ENCODE measurements at regions of chr5 and their contacts with region 1.

Region 1: DNA sequence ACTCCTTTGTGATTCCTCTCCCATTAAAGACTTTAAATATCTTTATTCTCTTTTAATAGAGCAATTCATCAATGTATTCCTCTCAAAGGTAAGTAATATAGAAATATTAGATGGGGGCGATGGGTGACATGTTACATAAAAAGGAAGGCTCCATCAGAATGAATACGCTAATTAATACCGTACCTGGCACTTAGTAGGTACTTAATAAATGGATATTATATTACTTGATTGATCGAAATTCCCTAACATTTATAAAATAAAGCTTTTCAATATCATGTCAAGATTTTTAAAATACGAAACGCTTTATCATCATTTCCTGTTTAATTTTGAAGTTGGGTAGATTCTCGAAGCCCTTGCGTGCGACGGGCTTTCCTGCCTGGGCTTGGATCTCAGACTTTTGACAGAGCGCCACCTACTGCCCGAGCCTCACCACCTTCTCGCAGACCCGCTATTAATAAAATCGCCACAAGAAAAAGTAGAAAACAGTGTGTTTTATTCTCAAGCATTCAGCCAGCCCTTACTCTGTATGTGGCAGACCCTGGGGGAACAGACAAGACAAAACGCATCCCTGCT is 99.4 kb downstream of the C5orf15 start:
- DNase-seq: peak; percentile 42 to 70 (median 51)
- H3K4me3 ChIP-seq: no peak overlapping the region
- H3K4me3 Mint-ChIP-seq: no peak overlapping the region
- H3K27ac ChIP-seq: no peak overlapping the region
- H3K27ac Mint-ChIP-seq: no peak overlapping the region
- H3K4me1 ChIP-seq: no peaks in the 10 kb centered on the region
- H3K4me1 Mint-ChIP-seq: peaks cover 0 to 4% (median 0%) of the 10 kb centered on the region in 3 donors
- H3K27me3 ChIP-seq: peaks cover 5% of the 10 kb centered on the region
- H3K27me3 Mint-ChIP-seq: peaks cover 11 to 36% of the 10 kb centered on the region in 2 donors

Region 2: DNA sequence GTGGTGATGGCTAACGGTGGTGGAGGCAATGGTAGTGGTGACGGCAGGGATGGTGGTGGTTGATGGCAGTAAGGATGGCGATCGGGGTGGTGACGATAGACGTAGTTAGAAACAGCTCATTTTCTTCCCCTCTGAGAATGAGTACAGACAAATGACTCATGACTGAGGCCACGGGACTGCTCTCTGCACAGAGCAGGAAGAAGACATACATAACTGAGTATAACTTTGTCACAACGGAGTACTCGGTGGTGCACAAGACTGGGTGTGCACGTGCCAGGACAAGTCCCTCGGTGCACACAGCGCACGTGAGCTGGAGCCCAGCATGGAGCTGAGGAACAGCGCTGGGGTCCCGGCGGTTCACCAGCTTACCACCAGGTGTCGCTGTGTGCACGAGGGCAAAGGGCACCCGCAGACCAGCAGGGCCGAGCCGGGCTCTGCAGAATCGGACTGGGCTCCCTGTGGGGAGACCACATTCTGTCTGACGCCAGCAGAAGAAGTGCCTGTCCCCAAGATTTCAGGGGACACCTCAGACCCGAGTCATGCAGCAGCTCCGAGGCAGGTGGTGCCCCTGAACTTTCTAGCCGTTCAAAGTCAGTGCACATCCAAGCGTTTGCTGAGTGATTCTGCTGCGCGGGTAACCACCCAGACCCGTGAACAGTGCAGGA is 445.3 kb before region 1 on chr5:
- CTCF ChIA-PET with region 1: interaction called, 14 read pairs
- POLR2A ChIA-PET with region 1: no interaction called
- DNase-seq: peak; percentile 42 to 65 (median 58)
- H3K4me3 ChIP-seq: no peak overlapping the region
- H3K4me3 Mint-ChIP-seq: no peak overlapping the region
- H3K27ac ChIP-seq: no peak overlapping the region
- H3K27ac Mint-ChIP-seq: no peak overlapping the region
- H3K4me1 ChIP-seq: no peaks in the 10 kb centered on the region
- H3K4me1 Mint-ChIP-seq: peaks cover 5 to 7% (median 6%) of the 10 kb centered on the region in 3 donors
- H3K27me3 ChIP-seq: no peaks in the 10 kb centered on the region
- H3K27me3 Mint-ChIP-seq: peaks cover 6 to 30% of the 10 kb centered on the region in 2 donors

Region 3: GRCh38 chr5:133881576-133882388 is 12.8 kb after region 1 on chr5:
- CTCF ChIA-PET with region 1: interaction called, 12 read pairs
- POLR2A ChIA-PET with region 1: no interaction called
- DNase-seq: no peak
- H3K4me3 ChIP-seq: no peak overlapping the region
- H3K4me3 Mint-ChIP-seq: no peak overlapping the region
- H3K27ac ChIP-seq: no peak overlapping the region
- H3K27ac Mint-ChIP-seq: no peak overlapping the region
- H3K4me1 ChIP-seq: no peaks in the 10 kb centered on the region
- H3K4me1 Mint-ChIP-seq: no peaks in the 10 kb centered on the region
- H3K27me3 ChIP-seq: no peaks in the 10 kb centered on the region
- H3K27me3 Mint-ChIP-seq: peaks cover 11 to 26% of the 10 kb centered on the region in 2 donors